Activated T-helper 2 cell treated with anti-CD3 and anti-CD28 coated beads, Interferon-gamma antibody, Interleukin-2, Interleukin-4, amounts not matched to agents 10 μg/mL and 5 μg/mL and 100 μg/mL, durations not matched to agents 14 hours and 24 hours and 36 hours (primary cell): ENCODE measurements at regions of chr6 and their contacts with region 1.

Region 1: DNA sequence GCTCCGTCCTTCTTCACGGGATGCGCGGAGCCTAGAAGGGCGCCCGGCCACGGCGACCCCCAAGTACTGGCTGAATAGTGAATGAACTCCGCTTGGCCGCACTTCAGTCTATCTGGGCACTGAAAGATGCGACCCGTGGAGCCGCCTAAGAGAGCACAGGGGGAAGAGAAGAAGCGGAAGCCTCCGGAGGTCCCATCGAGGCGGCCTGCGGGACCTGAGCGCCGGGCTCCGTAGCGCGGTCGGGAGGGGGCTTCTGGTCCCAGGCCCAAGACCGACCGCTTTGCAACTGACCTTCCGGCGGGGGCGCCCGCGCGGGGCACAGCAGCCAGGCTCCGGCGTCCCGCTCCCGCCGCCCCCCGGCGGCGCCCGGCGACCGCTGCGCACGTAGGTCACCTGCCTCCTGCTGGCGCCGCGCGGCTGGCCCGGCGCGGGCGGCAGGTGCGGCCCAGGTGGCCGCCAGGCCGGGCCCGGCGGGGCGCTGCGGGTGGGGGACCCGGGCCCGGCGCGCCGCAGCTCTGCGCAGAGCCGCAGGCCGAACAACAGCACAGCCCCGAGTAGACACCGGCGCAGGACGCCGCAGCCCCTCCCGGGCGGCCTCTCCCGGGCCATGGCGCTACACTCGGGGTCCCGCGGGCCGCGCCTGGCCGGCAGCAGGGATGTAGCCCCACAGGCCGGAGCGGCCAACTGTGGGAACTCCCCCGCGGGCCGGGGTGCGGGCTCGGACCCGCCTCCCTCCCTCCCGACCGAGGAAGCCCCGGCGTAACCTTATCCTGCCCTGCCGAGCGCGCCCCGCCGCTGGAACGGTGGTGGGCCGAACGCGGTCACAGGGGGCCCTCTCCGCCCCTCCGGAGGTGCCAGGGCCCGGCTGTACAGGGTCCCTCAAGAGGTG is at the start of gene METTL24:
- DNase-seq: no peak
- H3K4me3 Mint-ChIP-seq: peak within 1 kb of the TSS; percentile 68
- H3K27ac Mint-ChIP-seq: no peak within 1 kb of the TSS
- H3K4me1 Mint-ChIP-seq: peaks cover 4% of the 10 kb centered on the region
- H3K27me3 Mint-ChIP-seq: peaks cover 77% of the 10 kb centered on the region
- total RNA-seq, gene METTL24: not detected in 2 replicates

Region 2: GRCh38 chr6:110075406-110075805 is 282.5 kb before region 1 on chr6:
- intact Hi-C with region 1: loop called (anchors 10 kb)
- DNase-seq: no peak
- H3K4me3 Mint-ChIP-seq: no peak overlapping the region
- H3K27ac Mint-ChIP-seq: no peak overlapping the region
- H3K4me1 Mint-ChIP-seq: no peaks in the 10 kb centered on the region
- H3K27me3 Mint-ChIP-seq: peaks cover 16% of the 10 kb centered on the region